Caco-2 (cell line): ENCODE measurements at regions of chr4 and their contacts with region 1.

Region 1: GRCh38 chr4:123350191-123350544 is 46.4 kb upstream of the SPRY1 start:
- DNase-seq: peak; percentile 73 to 80
- H3K4me3 ChIP-seq: no peak overlapping the region
- H3K4me3 Mint-ChIP-seq: peak overlapping the region; percentile 36
- H3K27ac Mint-ChIP-seq: peak overlapping the region; percentile 81
- H3K4me1 ChIP-seq: peaks cover 28% of the 10 kb centered on the region
- H3K4me1 Mint-ChIP-seq: peaks cover 34% of the 10 kb centered on the region
- H3K27me3 ChIP-seq: no peaks in the 10 kb centered on the region
- H3K27me3 Mint-ChIP-seq: no peaks in the 10 kb centered on the region
- CTCF ChIP-seq: peak in 1 of 2 experiments; percentile 44

Region 2: GRCh38 chr4:123034023-123034422 is 316.1 kb before region 1 on chr4:
- CTCF ChIA-PET with region 1: no interaction called
- POLR2A ChIA-PET with region 1: no interaction called
- intact Hi-C with region 1: no loop called
- DNase-seq: no peak
- H3K4me3 ChIP-seq: no peak overlapping the region
- H3K4me3 Mint-ChIP-seq: no peak overlapping the region
- H3K27ac Mint-ChIP-seq: no peak overlapping the region
- H3K4me1 ChIP-seq: peaks cover 4% of the 10 kb centered on the region; the same call in 1 of the 2 replicates
- H3K4me1 Mint-ChIP-seq: no peaks in the 10 kb centered on the region
- H3K27me3 ChIP-seq: no peaks in the 10 kb centered on the region
- H3K27me3 Mint-ChIP-seq: no peaks in the 10 kb centered on the region
- CTCF ChIP-seq: no peak

Region 3: DNA sequence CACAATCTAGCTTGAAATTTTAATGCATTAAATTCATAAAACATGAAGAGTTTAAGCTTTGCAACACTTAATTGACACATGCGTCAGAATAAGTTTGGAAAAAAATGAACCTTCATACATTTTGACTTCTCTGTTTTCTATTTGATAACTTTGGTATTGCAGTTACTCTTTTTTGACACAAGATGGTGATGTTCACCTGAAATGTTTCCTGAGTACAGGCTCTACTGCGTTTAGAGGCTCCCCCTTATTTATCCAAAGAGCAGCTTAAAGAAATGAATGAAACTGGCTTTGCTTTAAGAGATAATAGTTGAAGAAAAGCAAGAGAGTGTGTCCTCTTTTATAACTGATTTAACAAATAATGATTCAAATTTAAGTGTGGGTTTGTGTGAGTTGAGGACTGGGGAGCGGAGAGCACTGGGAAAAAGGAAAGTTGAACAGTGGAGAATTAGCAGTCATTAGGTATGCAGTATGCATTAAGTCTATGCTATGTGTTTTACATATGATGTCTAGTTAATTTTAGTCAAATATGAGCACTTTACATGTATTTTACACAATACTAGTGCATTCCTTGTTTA is 247.2 kb before region 1 on chr4:
- CTCF ChIA-PET with region 1: interaction called, 4 read pairs
- POLR2A ChIA-PET with region 1: no interaction called
- intact Hi-C with region 1: loop called (anchors 1 kb)
- DNase-seq: peak in 1 of 2 experiments; percentile 34
- H3K4me3 ChIP-seq: no peak overlapping the region
- H3K4me3 Mint-ChIP-seq: no peak overlapping the region
- H3K27ac Mint-ChIP-seq: peak overlapping the region; percentile 3
- H3K4me1 ChIP-seq: peaks cover 3% of the 10 kb centered on the region; the same call in 1 of the 2 replicates
- H3K4me1 Mint-ChIP-seq: peaks cover 9% of the 10 kb centered on the region
- H3K27me3 ChIP-seq: no peaks in the 10 kb centered on the region
- H3K27me3 Mint-ChIP-seq: no peaks in the 10 kb centered on the region
- CTCF ChIP-seq: peak; percentile 46 to 57

Region 4: GRCh38 chr4:123312951-123313592 is 37.1 kb before region 1 on chr4:
- CTCF ChIA-PET with region 1: no interaction called
- POLR2A ChIA-PET with region 1: no interaction called
- intact Hi-C with region 1: no loop called
- DNase-seq: peak in 1 of 2 experiments; percentile 18
- H3K4me3 ChIP-seq: no peak overlapping the region
- H3K4me3 Mint-ChIP-seq: no peak overlapping the region
- H3K27ac Mint-ChIP-seq: peak overlapping the region; percentile 70
- H3K4me1 ChIP-seq: peaks cover 20% of the 10 kb centered on the region
- H3K4me1 Mint-ChIP-seq: peaks cover 10% of the 10 kb centered on the region
- H3K27me3 ChIP-seq: no peaks in the 10 kb centered on the region
- H3K27me3 Mint-ChIP-seq: no peaks in the 10 kb centered on the region
- CTCF ChIP-seq: no peak

Region 5: DNA sequence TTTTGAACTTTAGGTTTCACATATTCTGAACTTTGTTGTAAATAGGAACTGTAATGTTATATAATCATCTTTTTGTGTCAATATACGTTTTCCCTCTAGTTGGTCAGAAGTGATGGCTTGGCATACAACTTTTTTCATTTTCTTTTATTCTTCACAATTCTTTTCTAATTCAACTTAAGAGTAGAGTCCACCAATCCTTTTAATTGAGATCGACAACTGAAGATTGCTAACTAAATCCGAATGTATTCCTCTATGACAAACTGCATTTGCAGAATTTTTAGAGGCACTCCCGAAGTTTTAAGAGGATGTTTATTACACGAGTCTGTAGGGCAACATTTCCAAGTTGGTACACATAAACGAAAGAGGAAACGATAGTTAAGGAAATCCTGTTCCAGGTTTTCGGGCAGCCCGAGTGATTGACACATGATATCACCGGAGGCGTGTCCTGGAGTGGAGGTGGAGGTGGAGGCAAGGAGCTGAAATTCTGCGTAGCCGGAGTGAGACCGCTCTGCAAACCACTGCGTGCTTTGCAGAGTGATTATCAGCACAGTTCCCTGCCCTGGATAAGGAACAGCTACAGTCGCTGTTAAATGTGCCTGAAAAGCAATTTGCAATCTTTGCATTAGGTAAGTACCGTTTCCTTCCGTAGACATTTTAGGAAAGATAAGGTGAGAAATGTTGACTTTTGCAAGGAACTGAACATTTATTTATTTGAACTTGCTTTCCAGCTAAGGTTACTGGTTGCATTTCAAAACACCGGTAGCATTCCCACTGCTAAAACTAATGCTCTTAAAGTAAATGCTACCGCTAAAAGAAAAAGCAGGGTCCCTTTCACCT is 46.4 kb after region 1 on chr4 and contains the start of gene SPRY1:
- CTCF ChIA-PET with region 1: interaction called, 4 read pairs
- POLR2A ChIA-PET with region 1: no interaction called
- intact Hi-C with region 1: loop called (anchors 1 kb)
- DNase-seq: peak; percentile 88 to 92
- H3K4me3 ChIP-seq: peak within 1 kb of the TSS; percentile 86
- H3K4me3 Mint-ChIP-seq: peak within 1 kb of the TSS; percentile 80
- H3K27ac Mint-ChIP-seq: peak within 1 kb of the TSS; percentile 67
- H3K4me1 ChIP-seq: 0 out of 2 replicates have a peak, but pooled peaks cover 6% of the 10 kb centered on the region
- H3K4me1 Mint-ChIP-seq: peaks cover 5% of the 10 kb centered on the region
- H3K27me3 ChIP-seq: no peaks in the 10 kb centered on the region
- H3K27me3 Mint-ChIP-seq: no peaks in the 10 kb centered on the region
- CTCF ChIP-seq: no peak
- total RNA-seq, gene SPRY1: 23.2 and 23.4 TPM in 2 replicates

Region 6: DNA sequence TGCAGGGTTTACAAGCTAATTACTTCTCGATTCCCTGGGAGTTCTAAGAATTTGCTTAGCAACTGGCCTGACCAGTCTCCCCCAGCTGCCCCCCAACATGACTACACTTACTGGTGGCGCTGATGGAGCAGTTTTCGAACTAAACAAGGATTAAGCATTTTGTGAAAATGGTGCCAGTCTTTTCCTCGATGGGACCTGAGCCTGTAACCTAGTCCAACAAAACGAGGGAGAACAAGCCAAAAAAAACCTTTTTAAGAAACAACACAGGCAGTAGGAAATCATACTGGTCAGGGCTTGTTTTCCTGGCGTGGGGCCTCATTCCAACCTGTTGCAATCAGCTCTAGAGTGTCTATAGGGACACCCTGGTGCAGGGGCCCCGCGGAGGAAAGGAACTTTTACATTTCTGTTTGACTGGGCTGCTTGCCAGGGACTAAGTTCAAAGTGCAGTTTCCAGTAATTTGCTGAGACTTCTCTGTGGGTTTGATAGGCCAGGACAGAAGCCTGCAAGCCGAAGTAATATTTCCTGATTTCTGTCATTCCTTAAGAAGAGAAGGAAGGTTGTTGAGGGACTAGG is 205.2 kb after region 1 on chr4:
- CTCF ChIA-PET with region 1: no interaction called
- POLR2A ChIA-PET with region 1: interaction called, 3 read pairs
- intact Hi-C with region 1: loop called (anchors 2 kb)
- DNase-seq: peak; percentile 90 to 94
- H3K4me3 ChIP-seq: no peak overlapping the region
- H3K4me3 Mint-ChIP-seq: peak overlapping the region; percentile 73
- H3K27ac Mint-ChIP-seq: peak overlapping the region; percentile 95
- H3K4me1 ChIP-seq: peaks cover 56% of the 10 kb centered on the region
- H3K4me1 Mint-ChIP-seq: peaks cover 55% of the 10 kb centered on the region
- H3K27me3 ChIP-seq: no peaks in the 10 kb centered on the region
- H3K27me3 Mint-ChIP-seq: no peaks in the 10 kb centered on the region
- CTCF ChIP-seq: no peak

Region 7: DNA sequence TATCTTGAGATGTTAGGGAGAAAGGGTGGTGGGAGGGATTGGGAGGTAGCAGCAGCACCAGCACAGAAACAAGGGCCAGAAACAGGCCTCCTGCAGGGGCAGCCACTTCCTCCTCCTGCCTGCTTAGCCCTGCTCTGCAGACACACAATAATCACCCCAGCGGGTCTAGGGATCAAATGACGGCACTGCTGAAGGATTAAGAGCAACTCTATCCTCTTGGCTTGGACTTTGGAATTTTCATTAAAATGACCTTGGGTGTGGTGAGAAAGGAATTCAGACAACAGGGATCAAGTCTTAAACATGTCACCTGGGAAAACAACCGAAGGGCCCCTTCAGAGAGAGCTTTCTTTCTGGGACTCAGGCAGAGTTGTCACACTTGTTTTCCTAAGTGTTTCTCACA is 399.9 kb after region 1 on chr4:
- CTCF ChIA-PET with region 1: interaction called, 3 read pairs
- POLR2A ChIA-PET with region 1: no interaction called
- intact Hi-C with region 1: loop called (anchors 1 kb)
- DNase-seq: peak; percentile 62 to 79
- H3K4me3 ChIP-seq: no peak overlapping the region
- H3K4me3 Mint-ChIP-seq: no peak overlapping the region
- H3K27ac Mint-ChIP-seq: peak overlapping the region; percentile 74
- H3K4me1 ChIP-seq: peaks cover 15% of the 10 kb centered on the region
- H3K4me1 Mint-ChIP-seq: peaks cover 13% of the 10 kb centered on the region
- H3K27me3 ChIP-seq: no peaks in the 10 kb centered on the region
- H3K27me3 Mint-ChIP-seq: no peaks in the 10 kb centered on the region
- CTCF ChIP-seq: no peak

Region 8: DNA sequence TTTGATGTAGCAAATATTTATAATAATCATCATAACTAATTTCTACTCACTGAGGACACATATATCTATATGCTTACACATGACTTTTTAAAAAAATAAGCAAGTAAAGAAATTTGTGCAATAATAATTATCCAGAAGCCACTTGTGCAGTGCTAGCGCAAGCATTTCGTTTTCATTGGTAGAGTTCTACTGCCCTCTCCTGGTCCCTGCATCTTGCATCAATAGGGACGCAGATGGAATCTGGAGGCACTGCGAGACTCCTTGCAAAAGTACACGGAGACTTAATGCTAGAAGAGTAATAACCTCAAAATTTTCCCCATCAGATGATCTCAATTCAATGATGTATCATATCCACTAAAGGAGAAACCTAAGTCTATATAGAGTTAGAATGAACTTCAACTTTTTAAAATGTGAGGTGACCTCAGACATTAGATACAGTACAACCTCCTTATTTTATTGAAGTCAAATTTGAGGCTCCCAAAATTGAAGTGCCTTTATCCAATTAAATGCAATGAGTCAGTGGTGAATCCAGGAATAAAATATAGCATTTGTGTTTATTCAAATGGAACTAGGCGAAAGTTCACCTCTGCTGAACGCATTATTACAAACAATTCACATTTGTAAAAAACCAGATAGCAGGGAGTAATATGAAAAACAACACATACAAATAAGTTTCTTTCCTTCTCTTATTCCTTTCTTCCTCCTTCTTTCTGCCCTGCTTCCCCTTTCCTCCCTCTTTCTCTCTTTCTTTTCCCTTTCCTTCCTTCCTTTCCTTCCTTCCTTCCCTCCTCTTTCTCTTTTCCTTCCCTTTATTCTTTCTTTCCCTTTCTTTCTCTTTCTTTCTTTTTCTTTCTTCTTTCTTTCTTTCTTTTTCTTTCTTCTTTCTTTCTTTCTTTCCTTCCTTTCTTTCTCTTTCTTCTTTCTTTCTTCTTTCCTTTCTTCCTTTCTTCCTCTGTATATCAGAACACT is 912.3 kb after region 1 on chr4:
- CTCF ChIA-PET with region 1: no interaction called
- POLR2A ChIA-PET with region 1: no interaction called
- intact Hi-C with region 1: loop called (anchors 2 kb)
- DNase-seq: peak; percentile 58 to 74
- H3K4me3 ChIP-seq: no peak overlapping the region
- H3K4me3 Mint-ChIP-seq: no peak overlapping the region
- H3K27ac Mint-ChIP-seq: no peak overlapping the region
- H3K4me1 ChIP-seq: no peaks in the 10 kb centered on the region
- H3K4me1 Mint-ChIP-seq: no peaks in the 10 kb centered on the region
- H3K27me3 ChIP-seq: no peaks in the 10 kb centered on the region
- H3K27me3 Mint-ChIP-seq: peaks cover 6% of the 10 kb centered on the region
- CTCF ChIP-seq: peak; percentile 77 to 79